ENCODE measurements at regions of chr1 and their contacts with region 1.

Region 1: GRCh38 chr1:113072757-113073478 is at the start of gene LRIG2:
- DNase-seq: peak; percentile 97
- ATAC-seq: peak; percentile 96
- H3K4me3 ChIP-seq: peak within 1 kb of the TSS; percentile 74 to 94 (median 87)
- H3K4me3 Mint-ChIP-seq: peak within 1 kb of the TSS; percentile 99
- H3K27ac ChIP-seq: peak within 1 kb of the TSS; percentile 74 to 77
- H3K27ac Mint-ChIP-seq: peak within 1 kb of the TSS; percentile 97
- H3K4me1 ChIP-seq: peaks cover 15 to 18% of the 10 kb centered on the region in 2 donors
- H3K4me1 Mint-ChIP-seq: peaks cover 33% of the 10 kb centered on the region
- H3K27me3 ChIP-seq: no peaks in the 10 kb centered on the region
- H3K27me3 Mint-ChIP-seq: no peaks in the 10 kb centered on the region
- CTCF ChIP-seq: peak; percentile 95
- total RNA-seq, gene LRIG2: 30.6 and 32.2 TPM in 2 replicates

Region 2: DNA sequence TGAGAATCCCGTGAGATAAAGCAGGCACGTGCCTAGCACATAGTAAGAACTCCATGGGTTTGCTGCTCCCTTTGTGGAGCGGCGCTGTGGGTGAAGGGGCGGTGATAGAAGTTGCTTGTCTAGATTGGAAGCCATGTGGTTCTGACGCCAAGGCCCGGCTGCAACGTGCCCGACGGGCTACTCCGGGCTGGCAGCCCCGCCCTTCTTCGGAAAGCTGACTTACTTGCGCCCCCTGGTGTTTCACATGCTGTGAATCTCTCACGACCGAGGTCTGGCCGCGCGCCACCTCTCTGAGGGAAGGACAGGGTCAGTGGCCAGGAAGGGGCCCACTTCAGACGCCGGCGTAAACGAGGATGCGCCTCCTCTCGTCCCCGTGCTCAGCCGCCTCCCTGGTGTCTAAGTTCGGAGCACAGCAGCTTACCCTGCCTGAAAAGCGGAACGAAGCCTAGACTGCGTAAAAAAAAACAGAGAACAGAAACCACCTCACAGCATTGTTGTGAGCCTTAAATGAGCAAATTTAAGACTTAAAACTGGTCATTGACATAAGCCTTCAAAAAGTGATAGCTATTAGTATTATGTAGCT is 606.7 kb before region 1 on chr1:
- CTCF ChIA-PET with region 1: no interaction called
- POLR2A ChIA-PET with region 1: no interaction called
- intact Hi-C with region 1: loop called (anchors 2 kb)
- DNase-seq: peak; percentile 94
- ATAC-seq: peak; percentile 97
- H3K4me3 ChIP-seq: peak overlapping the region; percentile 5 to 51 (median 50)
- H3K4me3 Mint-ChIP-seq: peak overlapping the region; percentile 83
- H3K27ac ChIP-seq: peak overlapping the region; percentile 74 to 75
- H3K27ac Mint-ChIP-seq: peak overlapping the region; percentile 83
- H3K4me1 ChIP-seq: peaks cover 27 to 40% of the 10 kb centered on the region in 2 donors
- H3K4me1 Mint-ChIP-seq: peaks cover 46% of the 10 kb centered on the region
- H3K27me3 ChIP-seq: peaks cover 0 to 21% (median 12%) of the 10 kb centered on the region in 4 experiments
- H3K27me3 Mint-ChIP-seq: peaks cover 19% of the 10 kb centered on the region
- CTCF ChIP-seq: peak; percentile 75

Region 3: GRCh38 chr1:112882271-112882744 is 190.6 kb before region 1 on chr1:
- CTCF ChIA-PET with region 1: interaction called, 30 read pairs
- POLR2A ChIA-PET with region 1: no interaction called
- intact Hi-C with region 1: loop called (anchors 2 kb)
- DNase-seq: no peak
- ATAC-seq: no peak
- H3K4me3 ChIP-seq: no peak overlapping the region
- H3K4me3 Mint-ChIP-seq: no peak overlapping the region
- H3K27ac ChIP-seq: no peak overlapping the region
- H3K27ac Mint-ChIP-seq: no peak overlapping the region
- H3K4me1 ChIP-seq: no peaks in the 10 kb centered on the region
- H3K4me1 Mint-ChIP-seq: no peaks in the 10 kb centered on the region
- H3K27me3 ChIP-seq: peaks cover 0 to 5% (median 0%) of the 10 kb centered on the region in 4 experiments
- H3K27me3 Mint-ChIP-seq: peaks cover 7% of the 10 kb centered on the region
- CTCF ChIP-seq: no peak

Region 4: DNA sequence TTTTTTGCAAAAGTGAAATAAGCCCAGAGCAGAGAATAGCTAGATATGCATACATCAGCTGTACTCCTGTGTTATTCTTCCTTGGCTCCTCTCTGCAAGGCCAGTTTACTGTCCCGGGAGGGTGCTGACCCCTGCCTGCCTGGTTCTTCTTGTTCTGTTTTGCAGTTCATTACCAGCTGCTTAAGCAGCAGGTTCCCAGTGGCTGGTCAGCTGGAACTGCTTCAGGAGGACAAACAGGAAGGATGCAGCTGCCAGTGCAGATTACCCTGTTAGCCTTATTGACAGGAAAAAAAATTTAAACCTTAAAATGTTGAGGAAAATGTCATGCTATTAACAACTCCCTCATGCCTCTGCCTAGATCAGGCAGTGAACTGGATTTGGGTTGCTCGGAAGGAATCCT is 15.9 kb before region 1 on chr1:
- CTCF ChIA-PET with region 1: interaction called, 20 read pairs
- POLR2A ChIA-PET with region 1: no interaction called
- intact Hi-C with region 1: no loop called
- DNase-seq: peak; percentile 15
- ATAC-seq: no peak
- H3K4me3 ChIP-seq: peak overlapping the region in 3 of 5 experiments; percentile 7 to 51 (median 40)
- H3K4me3 Mint-ChIP-seq: peak overlapping the region; percentile 68
- H3K27ac ChIP-seq: peak overlapping the region in 1 of 2 donors; percentile 57
- H3K27ac Mint-ChIP-seq: peak overlapping the region; percentile 76
- H3K4me1 ChIP-seq: peaks cover 13 to 15% of the 10 kb centered on the region in 2 donors
- H3K4me1 Mint-ChIP-seq: peaks cover 17% of the 10 kb centered on the region
- H3K27me3 ChIP-seq: no peaks in the 10 kb centered on the region
- H3K27me3 Mint-ChIP-seq: no peaks in the 10 kb centered on the region
- CTCF ChIP-seq: no peak

Region 5: DNA sequence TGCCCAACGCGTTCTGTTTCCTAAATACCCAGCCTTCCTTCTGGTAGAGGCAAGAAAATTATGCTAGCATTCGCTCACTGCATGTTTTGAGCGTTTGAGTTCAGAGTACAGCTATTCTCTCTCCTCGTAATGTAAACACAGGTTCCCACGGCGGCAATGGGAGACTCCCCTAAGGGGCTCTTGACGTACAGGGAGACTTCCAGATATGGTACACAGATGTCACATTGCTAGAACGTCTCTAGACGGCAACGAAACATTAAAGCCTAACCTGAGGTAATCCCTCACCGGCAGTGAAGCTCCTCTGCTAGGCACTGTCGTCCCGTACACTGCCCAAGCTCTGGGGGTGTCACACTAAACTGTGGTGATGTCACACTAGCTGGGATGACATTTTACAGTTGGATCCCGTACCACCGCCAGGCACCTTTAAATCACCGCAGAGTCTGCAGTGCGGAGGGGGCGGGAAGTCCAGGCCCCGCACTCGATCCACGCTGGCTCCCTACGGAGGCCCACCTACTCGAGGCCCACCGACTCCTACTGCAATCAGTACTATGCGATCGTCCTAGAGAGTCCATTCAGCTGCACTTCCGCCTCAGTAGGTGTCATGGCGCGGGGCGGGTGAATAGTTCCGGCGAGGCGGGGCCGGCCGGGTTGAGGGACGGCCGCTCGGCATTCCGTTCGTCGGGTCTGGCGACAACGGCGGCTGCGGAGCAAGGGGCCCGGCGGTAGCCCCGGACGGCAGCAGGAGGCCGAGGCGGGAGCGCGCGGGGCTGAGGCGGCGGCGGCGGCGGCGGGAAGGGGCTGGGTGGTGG is 856.2 kb after region 1 on chr1 and contains the start of gene HIPK1:
- CTCF ChIA-PET with region 1: interaction called, 4 read pairs
- POLR2A ChIA-PET with region 1: no interaction called
- intact Hi-C with region 1: loop called (anchors 2 kb)
- DNase-seq: peak; percentile 96
- ATAC-seq: peak; percentile 75
- H3K4me3 ChIP-seq: peak within 1 kb of the TSS; percentile 76 to 92 (median 86)
- H3K4me3 Mint-ChIP-seq: peak within 1 kb of the TSS; percentile 100
- H3K27ac ChIP-seq: peak within 1 kb of the TSS; percentile 98 to 99
- H3K27ac Mint-ChIP-seq: peak within 1 kb of the TSS; percentile 100
- H3K4me1 ChIP-seq: peaks cover 33 to 35% of the 10 kb centered on the region in 2 donors
- H3K4me1 Mint-ChIP-seq: peaks cover 49% of the 10 kb centered on the region
- H3K27me3 ChIP-seq: no peaks in the 10 kb centered on the region
- H3K27me3 Mint-ChIP-seq: no peaks in the 10 kb centered on the region
- CTCF ChIP-seq: no peak
- total RNA-seq, gene HIPK1: 48.0 and 48.2 TPM in 2 replicates

Measured in B cell (primary cell).